Right ventricle myocardium inferior (tissue), 1 donor: ENCODE measurements at regions of chr7 and their contacts with region 1.

Region 1: DNA sequence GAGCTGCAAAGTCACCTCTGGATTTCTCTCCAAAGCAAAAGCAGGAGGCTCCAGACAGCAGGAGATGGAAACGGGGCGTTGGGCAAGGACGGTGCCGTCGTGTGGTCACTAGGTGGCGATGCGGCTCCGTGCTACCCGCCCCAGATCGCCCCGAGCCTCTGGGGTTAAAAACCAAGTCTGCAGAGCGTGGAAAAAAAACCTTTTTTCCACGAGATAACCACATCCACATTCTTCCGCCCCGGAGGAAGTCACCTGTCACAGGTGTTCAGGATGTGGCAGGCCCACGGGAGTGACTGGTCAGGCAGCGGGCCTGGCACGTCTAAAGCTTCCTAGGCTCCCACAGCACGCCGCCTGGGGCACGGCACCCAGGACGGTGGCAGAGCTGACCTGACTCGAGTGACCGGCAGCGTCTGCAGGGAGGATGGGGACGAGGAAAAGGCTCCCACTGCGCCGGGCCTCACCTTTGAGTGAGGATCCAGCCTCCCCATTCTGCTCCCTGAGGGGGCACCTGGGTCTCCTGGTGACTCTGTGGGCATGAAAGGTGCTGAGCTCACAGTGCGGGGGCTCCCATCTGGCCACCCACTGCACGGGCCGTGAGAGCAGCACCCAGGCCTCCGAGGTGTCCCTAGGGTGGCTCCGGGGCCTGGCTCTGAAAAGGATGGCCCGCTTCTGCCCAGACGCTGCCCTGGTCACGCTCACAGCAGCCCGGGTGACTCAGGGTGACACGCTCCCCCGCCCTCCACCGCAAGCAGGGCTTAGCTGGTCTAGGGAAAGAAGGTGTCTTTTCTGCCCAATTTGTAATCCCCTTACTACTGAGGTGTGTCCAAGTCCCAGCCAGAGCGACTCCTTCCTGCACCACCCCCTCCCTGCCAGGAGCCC is 71.3 kb upstream of the TNRC18 start:
- DNase-seq: peak; percentile 91
- ATAC-seq: peak; percentile 85

Region 2: DNA sequence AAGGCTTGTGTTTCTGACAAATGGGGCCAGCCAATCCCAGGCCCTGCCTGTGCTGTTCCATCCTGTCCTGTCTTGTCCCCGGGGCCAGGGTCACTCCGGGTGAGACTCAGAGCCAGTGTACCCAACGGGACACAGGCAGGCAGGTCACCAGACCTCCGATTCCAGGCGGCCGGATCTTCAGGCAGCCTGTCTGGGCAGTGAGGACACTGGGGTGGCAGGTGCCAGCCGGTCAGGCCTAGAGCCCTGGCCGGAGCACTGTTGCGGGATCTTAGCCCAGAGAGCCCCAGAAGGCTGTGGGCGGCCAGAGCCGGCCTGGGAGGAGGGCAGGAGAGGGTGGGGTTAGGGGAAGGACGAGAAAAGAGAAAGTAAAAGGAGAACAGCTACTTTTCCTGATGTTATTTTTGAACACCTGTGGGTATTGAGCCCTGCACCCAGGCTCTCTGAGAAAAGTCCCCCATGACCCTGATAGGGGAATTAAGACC is 63.0 kb after region 1 on chr7:
- intact Hi-C with region 1: loop called (anchors 1 kb)
- DNase-seq: peak; percentile 91
- ATAC-seq: peak; percentile 62

Region 3: GRCh38 chr7:5665094-5666025 is 170.4 kb after region 1 on chr7:
- intact Hi-C with region 1: loop called (anchors 5 kb)
- DNase-seq: no peak
- ATAC-seq: peak; percentile 80